Tibial artery (tissue), 4 donors: ENCODE measurements at regions of chr6 and their contacts with region 1.

Region 1: GRCh38 chr6:63598049-63599036 is 26.1 kb downstream of the LOC128125822 start:
- DNase-seq: peak; percentile 71 to 75
- H3K4me3 ChIP-seq: peak overlapping the region; percentile 37 to 52
- H3K27ac ChIP-seq: no peak overlapping the region
- H3K4me1 ChIP-seq: peaks cover 0 to 10% (median 7%) of the 10 kb centered on the region in 4 donors
- H3K27me3 ChIP-seq: no peaks in the 10 kb centered on the region
- CTCF ChIP-seq: peak; percentile 84 to 85

Region 2: DNA sequence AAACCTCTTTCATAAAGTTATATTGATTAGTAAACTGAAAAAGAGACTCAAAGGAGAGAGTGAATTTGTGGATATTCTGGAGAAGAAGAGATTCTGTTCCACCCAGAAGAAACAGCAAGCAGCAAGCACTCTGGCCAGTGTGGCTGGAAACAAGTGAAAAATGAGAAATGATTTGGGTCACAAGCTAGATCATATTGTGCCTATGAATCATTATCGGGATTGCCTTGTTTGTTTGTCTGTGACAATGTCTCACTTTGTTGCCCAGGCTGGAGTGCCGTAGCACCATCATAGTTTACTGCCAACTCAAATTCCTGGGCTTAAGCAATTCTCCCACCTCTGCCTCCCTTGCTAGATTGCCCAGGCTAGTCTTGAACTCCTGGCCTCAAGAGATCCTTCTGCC is 132.6 kb before region 1 on chr6:
- intact Hi-C with region 1: no loop called
- DNase-seq: no peak
- H3K4me3 ChIP-seq: no peak overlapping the region
- H3K27ac ChIP-seq: no peak overlapping the region
- H3K4me1 ChIP-seq: no peaks in the 10 kb centered on the region
- H3K27me3 ChIP-seq: no peaks in the 10 kb centered on the region
- CTCF ChIP-seq: no peak

Region 3: DNA sequence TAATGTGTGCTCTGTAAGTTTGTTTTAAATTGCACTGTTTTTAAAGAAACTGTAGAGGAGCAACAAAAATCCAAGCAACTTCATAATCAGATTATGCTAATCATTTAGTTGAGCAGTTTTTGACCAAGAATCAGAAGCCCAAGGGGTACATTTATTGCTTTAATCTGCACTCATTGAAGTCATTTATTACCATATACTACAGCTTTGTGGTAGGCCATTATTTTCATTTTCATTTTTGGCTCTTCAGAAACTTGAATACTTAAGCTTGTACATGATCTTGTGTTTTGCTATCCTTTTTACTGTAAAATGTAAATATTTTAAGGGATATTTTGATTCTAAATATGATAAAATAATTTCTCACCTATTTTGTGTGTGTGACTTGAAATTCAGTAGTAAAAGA is 115.7 kb after region 1 on chr6:
- intact Hi-C with region 1: no loop called
- DNase-seq: no peak
- H3K4me3 ChIP-seq: no peak overlapping the region
- H3K27ac ChIP-seq: no peak overlapping the region
- H3K4me1 ChIP-seq: no peaks in the 10 kb centered on the region
- H3K27me3 ChIP-seq: no peaks in the 10 kb centered on the region
- CTCF ChIP-seq: no peak

Region 4: DNA sequence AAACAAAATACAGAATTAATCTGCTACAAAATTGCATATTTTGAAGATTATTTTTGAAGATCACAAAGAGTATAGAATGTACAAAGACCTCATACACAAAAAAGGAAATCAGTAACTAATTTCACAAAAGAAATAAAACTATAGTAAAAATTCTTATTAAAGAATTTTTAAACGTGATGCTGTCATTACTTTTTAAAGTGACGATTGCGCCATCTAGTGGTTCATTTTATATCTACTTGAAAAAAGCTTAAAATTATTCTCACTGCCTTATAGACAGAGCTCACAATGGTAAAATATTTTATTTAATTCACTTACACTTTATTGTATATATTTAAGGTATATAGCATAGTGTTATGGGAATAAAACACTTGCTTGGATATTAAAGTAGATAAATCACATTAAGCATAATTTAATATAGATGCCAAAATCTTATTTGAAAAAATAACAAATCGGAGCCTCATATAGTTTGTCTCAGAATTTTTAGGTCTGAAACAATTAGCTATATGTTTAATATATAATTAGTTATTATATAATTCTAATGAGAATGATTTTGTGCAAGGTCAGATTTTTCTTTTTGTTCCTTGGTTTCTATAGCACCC is 166.1 kb after region 1 on chr6:
- intact Hi-C with region 1: loop called (anchors 2 kb)
- DNase-seq: no peak
- H3K4me3 ChIP-seq: no peak overlapping the region
- H3K27ac ChIP-seq: no peak overlapping the region
- H3K4me1 ChIP-seq: no peaks in the 10 kb centered on the region
- H3K27me3 ChIP-seq: no peaks in the 10 kb centered on the region
- CTCF ChIP-seq: peak; percentile 38 to 56